Activated CD4-positive, alpha-beta T cell treated with anti-CD3 and anti-CD28 coated beads, Interleukin-2, amount 10 ng/mL, durations not matched to agents 24 days and 14 days (primary cell): ENCODE measurements at regions of chr4 and their contacts with region 1.

Region 1: GRCh38 chr4:36394352-36394903 is 113.0 kb downstream of the DTHD1 start:
- DNase-seq: peak; percentile 88
- H3K4me3 Mint-ChIP-seq: peak overlapping the region; percentile 70
- H3K27ac Mint-ChIP-seq: peak overlapping the region; percentile 97
- H3K4me1 Mint-ChIP-seq: peaks cover 23% of the 10 kb centered on the region
- H3K27me3 Mint-ChIP-seq: no peaks in the 10 kb centered on the region

Region 2: DNA sequence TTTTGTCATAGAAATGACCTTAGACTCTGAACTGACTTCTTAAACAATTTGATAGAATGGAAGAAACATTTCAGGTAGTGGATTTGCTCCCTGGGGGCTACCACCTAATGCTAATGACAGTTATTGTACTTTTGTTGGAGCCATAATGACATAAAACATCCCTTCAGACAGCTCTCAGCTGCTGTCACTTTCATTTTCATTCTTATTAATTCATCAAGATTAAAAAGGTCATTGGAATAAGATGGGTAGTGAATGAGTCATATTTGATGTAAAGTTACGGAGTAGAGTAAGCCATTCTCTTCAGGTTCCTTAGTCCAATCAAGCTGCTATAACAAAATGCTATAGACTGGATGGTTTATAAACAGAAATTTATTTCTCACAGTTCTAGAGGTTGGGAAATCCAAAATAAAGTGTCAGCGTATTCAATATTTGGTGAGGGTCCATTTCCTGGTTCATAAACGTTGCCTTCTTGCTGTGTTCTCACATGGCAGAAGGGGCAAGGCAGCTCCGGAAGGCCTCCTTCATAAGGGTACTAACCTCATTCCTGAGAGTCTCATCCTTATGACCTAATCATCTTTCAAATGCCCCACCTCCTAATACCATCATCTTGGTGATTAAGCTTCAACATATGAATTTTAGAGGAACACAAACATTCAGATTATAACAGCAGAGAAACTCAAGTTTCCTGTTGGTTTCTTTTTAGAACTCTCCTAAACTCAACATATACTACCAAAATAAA is 418.6 kb before region 1 on chr4:
- intact Hi-C with region 1: loop called (anchors 5 kb)
- DNase-seq: no peak
- H3K4me3 Mint-ChIP-seq: no peak overlapping the region
- H3K27ac Mint-ChIP-seq: no peak overlapping the region
- H3K4me1 Mint-ChIP-seq: peaks cover 12% of the 10 kb centered on the region
- H3K27me3 Mint-ChIP-seq: no peaks in the 10 kb centered on the region

Region 3: DNA sequence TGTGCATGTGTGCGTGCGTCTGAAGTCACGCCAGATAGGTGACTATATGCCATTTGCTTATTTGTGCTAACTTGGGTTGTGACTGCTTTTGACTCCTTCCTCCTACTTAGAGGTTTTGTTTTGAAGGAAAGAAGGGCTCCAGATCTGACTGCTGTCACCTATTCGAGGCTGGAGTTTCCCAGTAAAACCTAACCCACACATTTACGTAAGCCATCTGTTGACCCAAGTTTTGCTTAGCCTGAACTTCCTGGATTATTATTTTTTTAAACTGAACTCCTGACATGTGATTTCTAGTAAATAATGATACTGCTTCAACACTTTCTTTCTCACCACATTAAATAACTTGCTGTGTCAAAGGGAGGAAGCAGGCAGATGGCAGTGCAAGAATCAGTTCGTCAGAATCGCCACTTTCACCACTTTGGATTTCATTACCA is 71.5 kb before region 1 on chr4:
- intact Hi-C with region 1: loop called (anchors 1 kb)
- DNase-seq: peak; percentile 90
- H3K4me3 Mint-ChIP-seq: peak overlapping the region; percentile 21
- H3K27ac Mint-ChIP-seq: peak overlapping the region; percentile 93
- H3K4me1 Mint-ChIP-seq: peaks cover 71% of the 10 kb centered on the region
- H3K27me3 Mint-ChIP-seq: no peaks in the 10 kb centered on the region

Region 4: DNA sequence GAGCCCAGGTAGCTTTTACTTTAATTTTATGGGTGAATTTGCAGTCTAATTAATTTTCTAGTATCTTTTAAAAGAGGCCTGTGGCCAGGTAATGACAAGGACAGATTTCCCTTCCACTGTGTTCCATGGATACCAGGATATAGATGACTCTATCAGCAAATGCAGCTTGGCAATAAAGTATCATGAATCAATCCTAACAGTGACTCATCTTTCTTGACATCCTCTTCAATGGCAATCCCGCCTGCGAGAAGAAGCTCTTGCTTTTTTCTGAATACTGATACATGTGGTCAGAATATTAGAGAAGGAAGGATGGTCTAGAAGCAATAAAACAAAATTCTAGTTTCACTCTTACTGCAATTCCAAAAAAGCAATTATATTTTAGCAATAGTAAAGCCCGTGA is 154.8 kb after region 1 on chr4:
- intact Hi-C with region 1: no loop called
- DNase-seq: no peak
- H3K4me3 Mint-ChIP-seq: no peak overlapping the region
- H3K27ac Mint-ChIP-seq: no peak overlapping the region
- H3K4me1 Mint-ChIP-seq: peaks cover 7% of the 10 kb centered on the region
- H3K27me3 Mint-ChIP-seq: no peaks in the 10 kb centered on the region